Astrocyte of the cerebellum (primary cell): ENCODE measurements at regions of chr4 and their contacts with region 1.

Region 1: GRCh38 chr4:24915121-24915922 is 2.5 kb upstream of the CCDC149 start:
- DNase-seq: no peak
- H3K4me3 ChIP-seq: no peak overlapping the region
- CTCF ChIP-seq: peak; percentile 14

Region 2: GRCh38 chr4:24701683-24702082 is 213.6 kb before region 1 on chr4:
- in situ Hi-C with region 1: no loop called
- DNase-seq: no peak
- H3K4me3 ChIP-seq: no peak overlapping the region
- CTCF ChIP-seq: no peak

Region 3: DNA sequence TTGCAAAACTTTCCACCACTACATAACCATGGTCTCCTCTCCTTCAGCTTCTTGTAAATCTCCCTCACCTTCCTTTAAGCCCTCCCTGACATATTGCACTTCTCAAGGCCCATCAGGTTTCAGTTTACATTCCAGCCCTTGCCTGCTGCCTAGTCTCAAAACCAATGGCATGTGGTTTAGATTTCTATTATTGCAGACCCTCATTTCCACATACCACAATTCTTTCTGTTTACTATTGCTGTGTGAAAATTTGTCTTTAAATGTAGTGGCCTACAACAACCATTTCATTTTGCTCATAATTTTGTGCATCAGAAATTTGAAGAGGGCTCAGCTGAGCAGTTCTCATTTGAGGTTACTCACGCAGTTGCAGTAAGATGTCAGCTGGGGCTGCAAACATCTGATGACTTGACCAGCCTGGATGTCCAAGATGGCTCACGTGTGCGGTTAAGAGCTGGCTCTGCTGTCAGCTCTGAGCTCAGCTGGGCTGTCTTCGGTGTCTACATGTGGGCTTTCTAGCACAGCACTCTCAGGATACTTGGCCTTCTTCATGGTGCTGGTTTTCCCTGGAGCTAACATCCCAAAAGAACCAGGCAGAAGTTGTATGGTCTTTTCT is 149.8 kb before region 1 on chr4:
- in situ Hi-C with region 1: no loop called
- DNase-seq: no peak
- H3K4me3 ChIP-seq: no peak overlapping the region
- CTCF ChIP-seq: no peak

Region 4: GRCh38 chr4:24850674-24851073 is 64.6 kb before region 1 on chr4:
- in situ Hi-C with region 1: no loop called
- DNase-seq: peak; percentile 77
- H3K4me3 ChIP-seq: no peak overlapping the region
- CTCF ChIP-seq: no peak

Region 5: GRCh38 chr4:24973733-24974601 is 58.6 kb after region 1 on chr4:
- in situ Hi-C with region 1: loop called (anchors 5 kb)
- DNase-seq: no peak
- H3K4me3 ChIP-seq: no peak overlapping the region
- CTCF ChIP-seq: no peak